SK-N-SH (cell line): ENCODE measurements at regions of chr11 and their contacts with region 1.

Region 1: GRCh38 chr11:73177778-73178577 is 35.9 kb upstream of the FCHSD2 start:
- DNase-seq: peak; percentile 86
- H3K4me3 ChIP-seq: no peak overlapping the region; a peak in 1 of 4 replicates
- H3K27ac ChIP-seq: no peak overlapping the region
- H3K4me1 ChIP-seq: peaks cover 5 to 10% of the 10 kb centered on the region in 2 experiments; a peak in 2 of 4 replicates
- H3K27me3 ChIP-seq: no peaks in the 10 kb centered on the region; the same call in 1 of the 2 replicates
- CTCF ChIP-seq: peak; percentile 79
- EP300 ChIP-seq: no peak
- RAD21 ChIP-seq: peak; percentile 98

Region 2: GRCh38 chr11:72831513-72832300 is 346.3 kb before region 1 on chr11:
- CTCF ChIA-PET with region 1: interaction called, 271 read pairs
- POLR2A ChIA-PET with region 1: interaction called, 8 read pairs
- DNase-seq: peak; percentile 88
- H3K4me3 ChIP-seq: no peak overlapping the region; a peak in 1 of 4 replicates
- H3K27ac ChIP-seq: no peak overlapping the region; a peak in 1 of 4 replicates
- H3K4me1 ChIP-seq: peaks cover 5 to 10% of the 10 kb centered on the region in 2 experiments; a peak in 2 of 4 replicates
- H3K27me3 ChIP-seq: no peaks in the 10 kb centered on the region
- CTCF ChIP-seq: peak; percentile 97
- EP300 ChIP-seq: no peak
- RAD21 ChIP-seq: peak; percentile 98

Region 3: DNA sequence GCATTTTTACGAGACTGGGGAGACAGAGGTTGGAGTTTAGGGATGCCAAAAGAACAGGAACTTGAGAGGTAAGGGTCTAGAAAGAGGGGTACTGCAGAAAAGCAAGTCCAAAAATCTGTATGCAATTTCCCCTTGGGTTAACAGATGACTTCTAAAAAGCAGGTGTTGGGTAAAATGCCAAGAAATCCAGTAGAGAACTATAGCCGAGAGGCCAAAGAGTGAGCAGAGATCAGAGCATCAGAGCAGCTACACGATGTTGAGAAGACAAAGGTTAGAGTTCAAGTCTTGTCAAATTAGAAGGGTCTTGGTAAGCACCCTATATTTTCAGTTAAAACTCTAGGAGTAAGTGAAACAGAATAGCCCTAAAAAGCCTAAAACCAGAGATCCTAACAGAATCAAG is 181.0 kb before region 1 on chr11:
- CTCF ChIA-PET with region 1: no interaction called
- POLR2A ChIA-PET with region 1: no interaction called
- DNase-seq: no peak
- H3K4me3 ChIP-seq: no peak overlapping the region
- H3K27ac ChIP-seq: no peak overlapping the region
- H3K4me1 ChIP-seq: no peaks in the 10 kb centered on the region; a peak in 1 of 4 replicates
- H3K27me3 ChIP-seq: no peaks in the 10 kb centered on the region
- CTCF ChIP-seq: no peak
- EP300 ChIP-seq: no peak
- RAD21 ChIP-seq: no peak

Region 4: GRCh38 chr11:73141848-73142286 is 36.1 kb before region 1 on chr11:
- CTCF ChIA-PET with region 1: interaction called, 25 read pairs
- POLR2A ChIA-PET with region 1: interaction called, 3 read pairs
- DNase-seq: no peak
- H3K4me3 ChIP-seq: peak overlapping the region; percentile 90 to 97
- H3K27ac ChIP-seq: peak overlapping the region; percentile 79 to 95
- H3K4me1 ChIP-seq: peaks cover 0 to 20% of the 10 kb centered on the region in 2 experiments; a peak in 2 of 4 replicates
- H3K27me3 ChIP-seq: no peaks in the 10 kb centered on the region
- CTCF ChIP-seq: no peak
- EP300 ChIP-seq: no peak
- RAD21 ChIP-seq: no peak

Region 5: DNA sequence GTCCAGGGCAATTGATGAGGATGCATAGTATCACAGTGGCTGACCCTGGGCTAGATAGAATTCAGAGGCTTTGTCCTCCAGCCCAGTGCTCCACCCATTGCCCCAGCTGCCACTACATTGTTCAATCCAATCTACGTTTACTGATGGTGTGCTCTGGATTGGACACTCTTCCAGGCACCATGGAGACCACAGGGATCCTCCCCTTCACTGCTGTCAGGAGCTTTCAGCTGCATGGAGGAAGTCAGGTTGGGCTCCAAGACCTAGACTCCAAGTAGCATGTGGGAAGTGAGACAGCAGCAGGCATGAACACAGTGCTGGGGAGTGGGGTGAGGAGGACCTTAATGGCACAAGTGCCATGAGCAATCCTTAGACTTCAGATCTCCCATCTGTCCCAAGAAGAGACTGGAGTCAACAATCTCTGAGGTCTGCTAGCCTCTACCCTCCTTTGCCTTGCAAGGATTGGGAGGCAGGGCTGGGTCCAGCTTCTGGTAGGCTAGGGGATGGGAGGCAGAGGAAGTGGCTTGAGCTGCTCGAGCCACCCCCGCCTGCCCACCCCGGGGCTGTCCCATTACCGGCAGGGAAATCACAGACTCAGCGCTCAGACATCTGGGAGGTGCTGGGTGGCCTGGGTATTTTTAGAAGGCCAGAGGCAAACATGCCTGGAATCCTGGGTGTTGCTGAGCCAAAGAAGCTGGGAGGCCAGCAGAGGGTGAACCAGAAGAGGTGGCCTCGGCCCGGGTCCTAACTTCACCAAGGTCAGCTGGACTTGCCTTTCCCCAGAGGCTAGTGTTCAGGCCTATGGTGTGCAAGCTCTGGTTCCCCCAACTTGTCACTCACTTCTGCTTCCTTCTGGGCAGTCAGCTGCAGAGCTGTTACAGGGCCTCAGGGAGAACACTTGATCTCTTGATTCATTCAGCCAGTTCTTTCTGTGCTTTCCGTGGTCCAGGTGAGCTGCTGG is 20.6 kb before region 1 on chr11:
- CTCF ChIA-PET with region 1: interaction called, 63 read pairs
- POLR2A ChIA-PET with region 1: interaction called, 3 read pairs
- DNase-seq: peak; percentile 21
- H3K4me3 ChIP-seq: no peak overlapping the region
- H3K27ac ChIP-seq: no peak overlapping the region
- H3K4me1 ChIP-seq: peaks cover 9 to 25% of the 10 kb centered on the region in 2 experiments; a peak in 2 of 4 replicates
- H3K27me3 ChIP-seq: no peaks in the 10 kb centered on the region
- CTCF ChIP-seq: no peak
- EP300 ChIP-seq: no peak
- RAD21 ChIP-seq: no peak

Region 6: DNA sequence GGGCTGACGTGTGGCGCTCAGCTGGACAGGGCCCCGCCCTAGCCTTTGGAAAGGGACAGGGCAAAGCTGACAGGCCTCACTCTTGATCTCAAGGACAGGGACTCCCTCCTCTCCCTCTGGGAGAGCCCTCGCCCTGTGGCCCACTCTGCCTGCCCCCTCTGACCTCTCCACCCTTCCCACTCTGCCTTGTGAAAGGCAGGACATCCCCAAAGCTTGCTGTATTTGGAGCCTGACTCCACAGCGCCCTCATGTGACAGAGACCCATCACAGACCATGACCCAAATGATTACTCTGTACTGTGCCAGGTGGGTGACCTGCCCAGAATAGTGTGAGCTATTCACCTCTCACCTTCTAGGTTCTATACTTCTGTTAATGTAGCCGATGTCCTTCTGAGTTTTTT is 58.9 kb after region 1 on chr11:
- CTCF ChIA-PET with region 1: interaction called, 53 read pairs
- POLR2A ChIA-PET with region 1: no interaction called
- DNase-seq: peak; percentile 63
- H3K4me3 ChIP-seq: no peak overlapping the region; a peak in 1 of 4 replicates
- H3K27ac ChIP-seq: no peak overlapping the region
- H3K4me1 ChIP-seq: peaks cover 0 to 7% of the 10 kb centered on the region in 2 experiments; a peak in 1 of 4 replicates
- H3K27me3 ChIP-seq: no peaks in the 10 kb centered on the region
- CTCF ChIP-seq: peak; percentile 62
- EP300 ChIP-seq: no peak
- RAD21 ChIP-seq: peak; percentile 53